Activated CD4-positive, alpha-beta memory T cell treated with anti-CD3 and anti-CD28 coated beads for 36 hours (primary cell): ENCODE measurements at regions of chr19 and their contacts with region 1.

Region 1: GRCh38 chr19:28633319-28634018 is 579.5 kb downstream of the UQCRFS1 start:
- DNase-seq: peak; percentile 30
- H3K4me3 Mint-ChIP-seq: no peak overlapping the region
- H3K27ac Mint-ChIP-seq: no peak overlapping the region
- H3K4me1 Mint-ChIP-seq: no peaks in the 10 kb centered on the region
- H3K27me3 Mint-ChIP-seq: no peaks in the 10 kb centered on the region

Region 2: DNA sequence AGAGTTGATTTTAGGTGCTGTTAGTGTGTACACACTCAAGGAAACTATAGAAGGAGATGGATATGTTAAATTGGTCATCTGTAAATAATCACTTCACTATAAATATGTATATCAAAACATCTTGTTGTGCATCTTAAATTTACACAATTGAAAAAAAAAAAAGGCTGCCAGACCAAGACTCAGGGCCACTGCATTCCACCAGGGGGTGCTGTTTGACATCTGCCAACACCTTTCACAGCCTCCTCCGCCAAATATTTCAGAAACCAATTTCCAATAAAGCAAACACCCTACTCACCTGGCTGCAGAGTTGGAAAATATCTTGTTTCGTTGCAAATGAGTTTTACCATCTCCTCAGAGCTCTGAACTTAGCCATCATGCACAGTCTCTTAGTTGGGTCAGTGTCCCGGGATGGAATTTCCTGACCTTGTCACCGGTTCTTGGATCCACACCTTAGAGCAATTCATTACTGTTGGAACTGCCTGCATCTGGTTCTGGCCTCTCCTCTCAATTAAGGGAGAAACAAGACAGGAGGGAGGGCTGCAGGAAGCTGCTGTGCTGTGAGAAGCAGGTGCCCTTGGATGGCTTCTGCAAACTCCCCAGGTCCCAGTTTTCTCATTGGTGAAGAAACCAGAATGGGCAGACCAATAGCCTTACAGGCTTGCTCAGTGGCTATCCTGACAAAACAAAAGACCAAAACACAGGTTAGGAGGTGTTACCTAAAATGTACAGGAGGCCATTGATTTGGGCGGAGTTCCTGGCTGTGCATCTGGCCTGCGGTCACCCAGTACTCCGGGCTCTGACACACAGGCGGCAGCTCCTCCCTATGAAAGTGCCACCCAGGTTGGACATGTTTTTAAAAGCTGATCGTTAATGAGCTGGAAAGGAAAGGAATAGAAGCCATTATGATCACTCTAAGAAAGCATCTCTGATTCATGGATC is 167.1 kb before region 1 on chr19:
- CTCF ChIA-PET with region 1: interaction called, 5 read pairs
- POLR2A ChIA-PET with region 1: no interaction called
- intact Hi-C with region 1: loop called (anchors 10 kb)
- DNase-seq: peak; percentile 55
- H3K4me3 Mint-ChIP-seq: no peak overlapping the region
- H3K27ac Mint-ChIP-seq: no peak overlapping the region
- H3K4me1 Mint-ChIP-seq: peaks cover 2% of the 10 kb centered on the region
- H3K27me3 Mint-ChIP-seq: no peaks in the 10 kb centered on the region

Region 3: GRCh38 chr19:28612275-28612769 is 21.1 kb before region 1 on chr19:
- CTCF ChIA-PET with region 1: no interaction called
- POLR2A ChIA-PET with region 1: no interaction called
- intact Hi-C with region 1: no loop called
- DNase-seq: no peak
- H3K4me3 Mint-ChIP-seq: no peak overlapping the region
- H3K27ac Mint-ChIP-seq: no peak overlapping the region
- H3K4me1 Mint-ChIP-seq: no peaks in the 10 kb centered on the region
- H3K27me3 Mint-ChIP-seq: no peaks in the 10 kb centered on the region

Region 4: DNA sequence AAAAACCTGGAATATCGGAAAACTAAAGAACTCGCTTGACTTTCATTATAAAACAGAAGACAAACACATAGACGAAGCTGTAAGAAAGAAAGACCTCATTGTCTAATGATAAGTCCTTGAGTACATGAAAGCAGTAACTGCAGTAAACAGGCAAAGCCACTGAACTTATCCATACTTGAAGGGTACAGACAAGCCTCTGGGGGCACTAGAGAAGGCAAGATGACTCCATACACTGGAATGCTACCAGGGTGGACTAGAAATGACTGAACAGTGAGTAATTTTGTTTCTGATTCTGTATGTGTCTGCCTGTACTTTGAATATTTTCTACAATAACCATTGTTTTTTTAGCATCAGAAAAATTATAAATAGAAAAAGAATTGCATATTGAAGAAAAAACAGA is 71.5 kb after region 1 on chr19:
- CTCF ChIA-PET with region 1: no interaction called
- POLR2A ChIA-PET with region 1: no interaction called
- intact Hi-C with region 1: no loop called
- DNase-seq: no peak
- H3K4me3 Mint-ChIP-seq: no peak overlapping the region
- H3K27ac Mint-ChIP-seq: no peak overlapping the region
- H3K4me1 Mint-ChIP-seq: no peaks in the 10 kb centered on the region
- H3K27me3 Mint-ChIP-seq: peaks cover 4% of the 10 kb centered on the region